ENCODE measurements at regions of chr7 and their contacts with region 1.

Region 1: DNA sequence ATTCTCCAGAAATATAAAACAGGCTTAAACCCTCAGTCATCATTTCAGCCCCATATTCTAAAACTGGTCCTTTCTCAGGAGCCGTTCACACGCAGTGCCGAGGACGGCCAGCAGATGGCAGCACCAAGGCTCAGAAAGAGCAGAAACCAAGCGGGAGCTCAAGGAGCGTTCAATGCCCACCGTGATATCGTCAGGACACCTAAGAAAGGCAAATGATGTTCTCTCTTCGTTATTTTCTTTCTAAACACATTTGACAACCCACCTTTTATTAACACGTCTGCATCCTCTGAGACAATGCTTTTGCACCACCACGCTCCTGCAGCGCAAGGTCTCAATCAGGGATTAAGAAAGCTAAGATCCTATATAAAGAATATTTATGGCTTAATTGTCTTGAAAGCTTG is 45.7 kb upstream of the RBM33 start:
- DNase-seq: peak; percentile 90
- ATAC-seq: peak; percentile 90
- H3K4me3 Mint-ChIP-seq: no peak overlapping the region
- H3K27ac Mint-ChIP-seq: no peak overlapping the region
- H3K4me1 Mint-ChIP-seq: peaks cover 7% of the 10 kb centered on the region
- H3K27me3 Mint-ChIP-seq: peaks cover 40% of the 10 kb centered on the region

Region 2: GRCh38 chr7:154729056-154729455 is 869.8 kb before region 1 on chr7:
- CTCF ChIA-PET with region 1: no interaction called
- POLR2A ChIA-PET with region 1: no interaction called
- DNase-seq: no peak
- ATAC-seq: no peak
- H3K4me3 Mint-ChIP-seq: no peak overlapping the region
- H3K27ac Mint-ChIP-seq: no peak overlapping the region
- H3K4me1 Mint-ChIP-seq: no peaks in the 10 kb centered on the region
- H3K27me3 Mint-ChIP-seq: no peaks in the 10 kb centered on the region

Region 3: GRCh38 chr7:155524018-155524616 is 74.7 kb before region 1 on chr7:
- CTCF ChIA-PET with region 1: no interaction called
- POLR2A ChIA-PET with region 1: no interaction called
- DNase-seq: no peak
- ATAC-seq: no peak
- H3K4me3 Mint-ChIP-seq: no peak overlapping the region
- H3K27ac Mint-ChIP-seq: no peak overlapping the region
- H3K4me1 Mint-ChIP-seq: no peaks in the 10 kb centered on the region
- H3K27me3 Mint-ChIP-seq: peaks cover 22% of the 10 kb centered on the region

Region 4: DNA sequence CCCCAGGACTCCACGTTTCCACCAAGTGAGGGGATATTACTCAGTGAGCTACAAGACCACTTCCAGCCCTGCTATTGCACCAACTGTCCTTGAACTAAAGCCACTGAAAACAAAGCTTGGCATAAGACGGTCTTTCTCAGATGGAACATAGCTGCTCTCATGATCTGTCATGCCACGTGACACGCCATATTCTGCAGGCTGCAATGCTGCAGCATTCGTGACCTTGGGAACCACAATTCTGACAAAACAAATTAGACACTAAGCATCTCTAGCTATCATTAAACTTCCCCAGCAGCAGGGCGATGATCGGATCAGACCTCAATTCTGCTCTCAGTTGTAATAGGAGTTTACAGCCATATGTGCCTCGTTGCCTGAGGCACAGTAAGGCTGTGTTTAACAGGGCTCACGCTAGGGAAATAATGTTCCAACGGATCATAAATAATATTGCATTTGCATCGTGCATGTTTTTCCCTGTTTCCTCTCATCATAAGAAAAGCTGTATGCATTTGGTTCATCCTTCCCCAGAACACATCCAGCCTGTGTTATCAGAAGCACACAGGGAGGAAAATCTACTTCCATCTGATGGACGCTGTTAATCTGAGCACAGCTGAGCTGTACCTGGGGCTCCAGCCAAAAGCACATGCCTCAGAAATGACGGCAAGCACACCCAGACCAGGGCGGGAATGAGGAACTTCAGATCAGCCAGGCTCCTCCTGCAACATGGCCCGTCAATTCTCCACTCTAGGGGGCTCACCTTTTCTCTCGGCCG is 13.9 kb before region 1 on chr7:
- CTCF ChIA-PET with region 1: interaction called, 25 read pairs
- POLR2A ChIA-PET with region 1: no interaction called
- DNase-seq: no peak
- ATAC-seq: no peak
- H3K4me3 Mint-ChIP-seq: no peak overlapping the region
- H3K27ac Mint-ChIP-seq: no peak overlapping the region
- H3K4me1 Mint-ChIP-seq: peaks cover under 1% of the 10 kb centered on the region
- H3K27me3 Mint-ChIP-seq: peaks cover 29% of the 10 kb centered on the region

Region 5: GRCh38 chr7:155637155-155637554 is 38.3 kb after region 1 on chr7:
- CTCF ChIA-PET with region 1: interaction called, 10 read pairs
- POLR2A ChIA-PET with region 1: no interaction called
- DNase-seq: no peak
- ATAC-seq: no peak
- H3K4me3 Mint-ChIP-seq: no peak overlapping the region
- H3K27ac Mint-ChIP-seq: no peak overlapping the region
- H3K4me1 Mint-ChIP-seq: no peaks in the 10 kb centered on the region
- H3K27me3 Mint-ChIP-seq: peaks cover 19% of the 10 kb centered on the region

Region 6: GRCh38 chr7:155702616-155703015 is 103.8 kb after region 1 on chr7:
- CTCF ChIA-PET with region 1: interaction called, 29 read pairs
- POLR2A ChIA-PET with region 1: no interaction called
- DNase-seq: no peak
- ATAC-seq: no peak
- H3K4me3 Mint-ChIP-seq: no peak overlapping the region
- H3K27ac Mint-ChIP-seq: no peak overlapping the region
- H3K4me1 Mint-ChIP-seq: peaks cover 10% of the 10 kb centered on the region
- H3K27me3 Mint-ChIP-seq: no peaks in the 10 kb centered on the region

Region 7: DNA sequence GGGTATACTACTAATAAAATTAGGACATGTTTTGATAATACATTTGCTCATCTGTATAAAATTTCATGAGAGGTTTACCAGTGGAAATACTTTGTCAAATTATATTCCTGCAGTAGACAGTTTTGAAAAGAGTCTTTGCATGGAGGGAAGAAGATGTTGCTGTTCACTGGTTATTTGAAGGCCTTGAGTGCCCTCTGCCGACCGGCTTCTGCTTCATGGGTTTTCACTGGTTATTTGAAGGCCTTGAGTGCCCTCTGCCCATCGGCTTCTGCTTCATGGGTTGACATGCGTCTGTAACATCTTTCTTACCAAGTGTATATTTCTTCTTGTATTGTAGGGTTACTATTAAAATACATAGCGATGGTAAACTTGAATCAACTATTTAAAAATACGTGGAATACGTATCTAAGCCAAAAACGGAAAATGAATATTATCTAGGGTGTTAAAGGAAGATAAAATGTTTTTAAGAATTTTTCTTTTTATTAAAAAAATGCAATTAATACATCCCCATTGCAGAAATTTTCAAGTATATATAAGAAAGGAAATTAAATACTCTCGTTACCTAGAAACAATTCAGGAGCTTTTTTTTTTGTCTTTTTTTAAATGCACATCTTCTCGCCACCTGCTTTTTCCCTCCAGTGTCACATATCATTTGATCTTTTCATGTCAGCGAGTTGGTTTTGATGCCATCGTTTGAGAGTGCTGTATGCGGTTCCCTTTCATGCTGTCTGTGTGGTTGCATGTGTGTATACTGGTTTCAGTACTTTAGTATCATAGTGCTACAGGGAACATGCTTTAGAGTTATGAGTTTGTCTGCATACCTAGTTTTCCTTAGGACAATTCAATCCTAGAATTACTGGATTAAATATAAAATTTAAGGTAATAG is 140.1 kb after region 1 on chr7:
- CTCF ChIA-PET with region 1: interaction called, 18 read pairs
- POLR2A ChIA-PET with region 1: no interaction called
- DNase-seq: peak; percentile 81
- ATAC-seq: peak; percentile 85
- H3K4me3 Mint-ChIP-seq: peak overlapping the region; percentile 48
- H3K27ac Mint-ChIP-seq: peak overlapping the region; percentile 74
- H3K4me1 Mint-ChIP-seq: peaks cover 59% of the 10 kb centered on the region
- H3K27me3 Mint-ChIP-seq: no peaks in the 10 kb centered on the region

Region 8: GRCh38 chr7:155763691-155764437 is 165.1 kb after region 1 on chr7:
- CTCF ChIA-PET with region 1: interaction called, 146 read pairs
- POLR2A ChIA-PET with region 1: no interaction called
- DNase-seq: peak; percentile 82
- ATAC-seq: peak; percentile 83
- H3K4me3 Mint-ChIP-seq: peak overlapping the region; percentile 68
- H3K27ac Mint-ChIP-seq: peak overlapping the region; percentile 98
- H3K4me1 Mint-ChIP-seq: peaks cover 77% of the 10 kb centered on the region
- H3K27me3 Mint-ChIP-seq: no peaks in the 10 kb centered on the region

Measured in activated CD8-positive, alpha-beta T cell treated with anti-CD3 and anti-CD28 coated beads, Interleukin-2, amount 10 ng/mL, durations not matched to agents 7 days and 5 days (primary cell).